Activated CD4-positive, alpha-beta T cell treated with anti-CD3 and anti-CD28 coated beads, Interleukin-2, amount 10 ng/mL, durations not matched to agents 7 days and 5 days (primary cell): ENCODE measurements at regions of chr2 and their contacts with region 1.

Region 1: DNA sequence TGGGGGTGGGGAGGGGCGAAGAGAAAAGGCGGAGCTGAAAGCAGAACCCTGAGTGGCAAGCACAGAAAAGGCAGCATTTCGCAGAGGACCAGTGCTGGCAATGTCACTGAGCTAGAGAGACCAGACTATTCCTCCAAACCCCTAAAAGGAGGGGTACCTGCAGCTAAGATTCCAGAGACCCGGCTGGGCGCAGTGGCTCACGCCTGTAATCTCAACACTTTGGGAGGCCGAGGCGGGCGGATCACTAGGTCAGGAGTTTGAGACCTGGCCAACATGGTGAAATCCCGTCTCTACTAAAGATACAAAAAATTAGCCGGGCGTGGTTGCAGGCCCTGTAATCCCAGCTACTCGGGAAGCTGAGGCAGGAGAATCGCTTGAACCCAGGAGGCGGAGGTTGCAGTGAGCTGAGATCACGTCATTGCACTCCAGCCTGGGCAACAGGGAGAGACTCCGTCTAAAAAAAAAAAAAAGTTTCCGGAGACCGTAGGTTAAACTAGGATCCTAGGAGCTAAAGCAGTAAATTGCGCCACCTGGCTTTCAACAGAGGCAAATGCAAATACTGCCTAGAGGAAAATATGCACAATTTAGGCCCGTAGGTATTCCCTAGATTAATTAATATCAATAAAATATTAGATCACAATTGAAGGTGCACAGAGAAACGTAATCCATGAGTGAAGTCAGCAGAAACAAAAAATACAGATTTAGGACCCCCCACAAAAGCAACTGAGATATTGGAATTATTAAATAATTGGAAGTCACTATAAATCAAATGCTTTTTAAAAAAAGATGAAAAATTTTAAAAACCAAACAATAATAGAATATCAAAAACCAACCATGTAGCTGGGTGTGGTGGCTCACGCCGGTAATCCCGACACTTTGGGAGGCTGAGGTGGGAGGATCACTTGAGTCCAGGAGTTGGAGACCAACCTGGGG is 4.9 kb downstream of the UCN start:
- DNase-seq: peak; percentile 71
- H3K4me3 Mint-ChIP-seq: peak overlapping the region; percentile 64
- H3K27ac Mint-ChIP-seq: peak overlapping the region; percentile 54
- H3K4me1 Mint-ChIP-seq: peaks cover 10% of the 10 kb centered on the region
- H3K27me3 Mint-ChIP-seq: peaks cover 20% of the 10 kb centered on the region

Region 2: GRCh38 chr2:27264753-27265535 is 38.4 kb before region 1 on chr2:
- CTCF ChIA-PET with region 1: interaction called, 17 read pairs
- POLR2A ChIA-PET with region 1: no interaction called
- DNase-seq: peak; percentile 51
- H3K4me3 Mint-ChIP-seq: peak overlapping the region; percentile 39
- H3K27ac Mint-ChIP-seq: no peak overlapping the region
- H3K4me1 Mint-ChIP-seq: peaks cover 27% of the 10 kb centered on the region
- H3K27me3 Mint-ChIP-seq: peaks cover 45% of the 10 kb centered on the region

Region 3: GRCh38 chr2:27291865-27292264 is 11.5 kb before region 1 on chr2:
- CTCF ChIA-PET with region 1: interaction called, 12 read pairs
- POLR2A ChIA-PET with region 1: no interaction called
- DNase-seq: no peak
- H3K4me3 Mint-ChIP-seq: no peak overlapping the region
- H3K27ac Mint-ChIP-seq: no peak overlapping the region
- H3K4me1 Mint-ChIP-seq: no peaks in the 10 kb centered on the region
- H3K27me3 Mint-ChIP-seq: peaks cover 35% of the 10 kb centered on the region

Region 4: GRCh38 chr2:27313882-27314645 is 10.7 kb after region 1 on chr2:
- CTCF ChIA-PET with region 1: interaction called, 13 read pairs
- POLR2A ChIA-PET with region 1: no interaction called
- DNase-seq: no peak
- H3K4me3 Mint-ChIP-seq: no peak overlapping the region
- H3K27ac Mint-ChIP-seq: no peak overlapping the region
- H3K4me1 Mint-ChIP-seq: no peaks in the 10 kb centered on the region
- H3K27me3 Mint-ChIP-seq: no peaks in the 10 kb centered on the region

Region 5: DNA sequence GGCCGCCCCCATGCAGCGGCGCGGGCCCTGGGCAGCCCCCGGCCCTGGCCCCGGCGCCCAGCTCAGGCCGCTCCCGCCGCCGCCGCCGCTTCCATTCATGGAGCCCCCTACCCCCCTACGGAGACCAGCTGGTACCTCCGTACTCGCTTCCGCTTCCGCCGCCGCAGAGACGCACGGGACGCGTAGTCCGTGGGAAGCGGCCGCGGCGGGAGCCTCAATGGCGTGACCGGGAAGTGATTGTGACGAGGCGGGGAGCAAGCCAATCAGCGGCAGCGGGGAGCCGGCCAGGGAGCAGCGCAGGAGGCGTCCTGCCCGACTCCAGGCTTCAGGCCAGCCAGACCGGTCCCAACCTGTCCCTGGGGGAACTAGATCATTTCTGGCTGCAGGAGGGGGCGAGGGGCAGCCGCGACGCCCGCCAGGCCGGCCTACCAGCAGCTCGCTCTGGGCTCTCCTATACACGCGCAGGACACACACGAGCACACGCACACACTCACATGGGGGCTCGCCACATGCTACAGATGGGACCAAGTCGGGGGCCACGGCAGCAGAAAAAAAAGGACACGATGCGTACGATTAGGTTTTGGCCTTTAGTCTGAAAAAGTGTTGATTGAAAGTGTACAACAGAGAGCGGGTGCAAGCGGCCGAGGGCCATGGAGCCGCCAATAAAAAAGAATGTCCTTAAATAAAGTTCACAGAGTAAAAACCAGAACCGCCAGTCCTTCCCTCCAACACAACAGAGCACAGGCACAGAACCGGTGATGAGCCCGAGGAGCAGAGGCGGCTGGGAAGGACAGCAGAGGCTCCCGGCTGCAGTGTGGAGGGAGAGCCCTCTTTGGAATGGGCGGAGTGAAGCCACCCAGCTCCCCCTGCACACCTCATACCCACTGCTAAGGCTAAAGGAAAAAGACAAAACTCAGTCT is 77.5 kb after region 1 on chr2 and contains the start of gene ZNF513:
- CTCF ChIA-PET with region 1: no interaction called
- POLR2A ChIA-PET with region 1: no interaction called
- DNase-seq: peak; percentile 92
- H3K4me3 Mint-ChIP-seq: peak within 1 kb of the TSS; percentile 90
- H3K27ac Mint-ChIP-seq: peak within 1 kb of the TSS; percentile 96
- H3K4me1 Mint-ChIP-seq: peaks cover 31% of the 10 kb centered on the region
- H3K27me3 Mint-ChIP-seq: no peaks in the 10 kb centered on the region
- total RNA-seq, gene ZNF513: 14.3 to 15.4 TPM

Region 6: DNA sequence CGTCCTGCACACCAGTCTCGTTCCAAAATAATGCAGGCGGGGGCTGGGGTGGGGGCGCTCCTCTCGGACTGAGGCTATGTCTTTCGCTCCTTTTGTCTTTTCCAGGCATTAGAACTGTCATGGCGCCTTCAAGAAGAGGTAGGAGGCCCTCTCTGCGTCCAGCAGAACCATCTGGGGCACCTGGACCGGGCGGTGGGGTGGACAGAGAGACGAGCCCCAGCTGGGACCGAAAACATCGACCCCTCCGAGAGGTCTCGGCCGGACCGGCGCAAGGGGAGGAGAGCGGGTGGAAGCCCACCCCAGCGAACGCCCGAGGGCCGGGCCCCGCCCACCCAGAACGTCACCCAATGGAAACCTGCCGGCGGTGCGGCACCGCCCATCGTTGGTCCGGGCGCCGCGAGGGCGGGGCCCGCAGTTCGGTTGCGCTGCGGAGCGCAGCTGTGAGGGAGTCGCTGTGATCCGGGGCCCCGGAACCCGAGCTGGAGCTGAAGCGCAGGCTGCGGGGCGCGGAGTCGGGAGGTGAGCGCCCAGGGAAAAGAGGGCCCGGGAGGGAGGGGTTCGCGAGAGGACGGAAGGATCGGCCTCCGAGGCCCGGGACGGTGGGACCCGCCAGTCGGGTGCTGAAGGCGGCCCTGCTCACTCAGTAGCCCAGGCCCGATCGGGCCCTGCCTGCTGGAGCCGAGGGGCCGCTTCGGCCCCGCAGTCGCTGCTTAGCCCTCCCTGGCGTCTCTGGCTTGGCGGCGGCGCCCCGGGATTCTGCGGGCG is 125.0 kb after region 1 on chr2 and contains the start of gene NRBP1:
- CTCF ChIA-PET with region 1: no interaction called
- POLR2A ChIA-PET with region 1: no interaction called
- DNase-seq: peak; percentile 94
- H3K4me3 Mint-ChIP-seq: peak within 1 kb of the TSS; percentile 99
- H3K27ac Mint-ChIP-seq: peak within 1 kb of the TSS; percentile 99
- H3K4me1 Mint-ChIP-seq: peaks cover 37% of the 10 kb centered on the region
- H3K27me3 Mint-ChIP-seq: peaks cover 3% of the 10 kb centered on the region
- total RNA-seq, gene NRBP1: 77.1 to 82.3 TPM

Region 7: DNA sequence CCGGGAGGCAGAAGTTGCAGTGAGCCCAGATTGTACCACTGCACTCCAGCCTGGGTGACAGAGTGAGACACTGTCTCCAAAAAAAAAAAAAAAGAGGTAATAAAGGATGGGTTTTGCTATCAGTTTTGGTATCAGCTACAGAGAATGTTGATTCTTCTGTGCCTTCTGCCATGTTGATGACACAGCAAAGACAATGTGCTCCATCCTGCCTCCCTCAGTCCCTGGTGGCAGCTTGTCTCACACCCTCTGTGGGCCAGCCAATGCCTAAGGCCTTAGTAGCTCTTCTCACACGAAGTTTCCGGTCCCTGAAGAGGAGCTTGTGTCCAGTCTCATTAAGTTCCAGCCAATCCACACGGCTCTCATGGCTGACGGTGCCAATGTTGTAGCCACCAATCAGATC is 168.6 kb after region 1 on chr2:
- CTCF ChIA-PET with region 1: no interaction called
- POLR2A ChIA-PET with region 1: no interaction called
- DNase-seq: no peak
- H3K4me3 Mint-ChIP-seq: no peak overlapping the region
- H3K27ac Mint-ChIP-seq: no peak overlapping the region
- H3K4me1 Mint-ChIP-seq: no peaks in the 10 kb centered on the region
- H3K27me3 Mint-ChIP-seq: no peaks in the 10 kb centered on the region